ENCODE measurements at regions of chr12 and their contacts with region 1.

Region 1: GRCh38 chr12:66371982-66372381 is 69.7 kb downstream of the HELB start:
- DNase-seq: no peak
- ATAC-seq: no peak
- H3K4me3 ChIP-seq: no peak overlapping the region
- H3K27ac ChIP-seq: no peak overlapping the region
- H3K4me1 ChIP-seq: no peaks in the 10 kb centered on the region
- H3K27me3 ChIP-seq: no peaks in the 10 kb centered on the region

Region 2: DNA sequence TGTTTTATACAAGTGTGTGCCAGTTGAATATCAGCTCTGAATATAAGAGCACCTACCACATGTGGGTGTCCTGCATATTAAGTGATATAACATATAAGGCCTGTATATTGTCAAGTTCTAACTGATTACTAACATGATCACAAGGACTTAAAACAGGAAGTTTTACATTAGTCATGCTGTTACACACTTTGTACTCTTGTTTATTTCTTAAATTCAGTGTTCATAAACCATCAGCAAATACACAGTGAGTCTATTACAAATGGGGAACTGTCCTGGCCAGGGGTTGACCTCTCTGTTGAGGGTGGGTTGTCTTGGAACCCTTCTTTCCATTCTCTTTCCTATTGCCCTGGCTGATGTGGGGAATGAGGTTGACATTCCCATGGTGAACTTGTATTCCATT is 50.5 kb before region 1 on chr12:
- intact Hi-C with region 1: loop called in 1 of 4 experiments (anchors 5 kb)
- DNase-seq: no peak
- ATAC-seq: no peak
- H3K4me3 ChIP-seq: no peak overlapping the region
- H3K27ac ChIP-seq: no peak overlapping the region
- H3K4me1 ChIP-seq: no peaks in the 10 kb centered on the region
- H3K27me3 ChIP-seq: no peaks in the 10 kb centered on the region

Measured in right cardiac atrium (tissue), 5 donors.